PC-9 (cell line): ENCODE measurements at regions of chr3 and their contacts with region 1.

Region 1: DNA sequence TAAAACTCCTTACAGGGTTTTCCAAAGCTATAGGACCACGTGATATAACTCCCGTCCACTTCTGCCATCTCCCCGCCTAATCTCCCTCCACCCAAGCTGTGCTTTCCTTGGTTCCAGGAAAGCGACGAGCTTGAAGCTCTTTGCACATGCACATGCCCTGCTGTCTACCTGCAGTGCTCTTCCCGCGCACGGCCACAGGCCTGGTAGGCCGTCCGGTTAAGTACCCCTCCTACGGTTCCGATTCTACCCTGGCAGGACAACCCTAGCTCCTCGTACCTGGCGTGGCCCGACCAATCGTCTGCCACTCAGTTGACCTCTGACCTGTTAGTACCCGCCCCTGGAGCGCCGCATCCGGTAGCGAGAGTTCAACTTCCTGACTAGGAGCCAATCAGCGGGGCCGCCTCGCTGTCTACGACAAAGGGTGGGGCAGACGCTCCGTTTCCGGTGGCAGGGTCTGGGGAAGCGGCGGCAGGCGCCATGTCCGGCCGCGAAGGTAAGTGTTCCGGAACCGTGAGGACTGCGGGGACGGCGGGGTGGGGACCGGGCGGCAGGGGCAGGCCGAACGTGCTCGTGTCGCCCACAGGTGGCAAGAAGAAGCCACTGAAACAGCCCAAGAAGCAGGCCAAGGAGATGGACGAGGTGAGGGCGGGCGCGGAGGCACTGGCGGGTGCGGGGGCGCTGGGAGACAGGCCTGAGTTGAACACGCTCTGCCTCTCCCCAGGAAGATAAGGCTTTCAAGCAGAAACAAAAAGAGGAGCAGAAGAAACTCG is at the starts of genes CCDC51 and TMA7:
- DNase-seq: peak; percentile 95 to 96
- H3K4me3 ChIP-seq: peak within 1 kb of the TSS; percentile 96
- H3K27ac ChIP-seq: peak within 1 kb of the TSS; percentile 46
- H3K4me1 ChIP-seq: peaks cover 11% of the 10 kb centered on the region
- H3K27me3 ChIP-seq: no peaks in the 10 kb centered on the region
- CTCF ChIP-seq: no peak
- total RNA-seq, gene CCDC51: 28.5 and 35.4 TPM in 2 replicates
- total RNA-seq, gene TMA7: 235 and 314 TPM in 2 replicates

Region 2: GRCh38 chr3:48199956-48200355 is 240.0 kb before region 1 on chr3:
- CTCF ChIA-PET with region 1: interaction called, 34 read pairs
- POLR2A ChIA-PET with region 1: no interaction called
- intact Hi-C with region 1: no loop called
- DNase-seq: no peak
- H3K4me3 ChIP-seq: no peak overlapping the region
- H3K27ac ChIP-seq: no peak overlapping the region
- H3K4me1 ChIP-seq: no peaks in the 10 kb centered on the region
- H3K27me3 ChIP-seq: no peaks in the 10 kb centered on the region
- CTCF ChIP-seq: no peak

Region 3: DNA sequence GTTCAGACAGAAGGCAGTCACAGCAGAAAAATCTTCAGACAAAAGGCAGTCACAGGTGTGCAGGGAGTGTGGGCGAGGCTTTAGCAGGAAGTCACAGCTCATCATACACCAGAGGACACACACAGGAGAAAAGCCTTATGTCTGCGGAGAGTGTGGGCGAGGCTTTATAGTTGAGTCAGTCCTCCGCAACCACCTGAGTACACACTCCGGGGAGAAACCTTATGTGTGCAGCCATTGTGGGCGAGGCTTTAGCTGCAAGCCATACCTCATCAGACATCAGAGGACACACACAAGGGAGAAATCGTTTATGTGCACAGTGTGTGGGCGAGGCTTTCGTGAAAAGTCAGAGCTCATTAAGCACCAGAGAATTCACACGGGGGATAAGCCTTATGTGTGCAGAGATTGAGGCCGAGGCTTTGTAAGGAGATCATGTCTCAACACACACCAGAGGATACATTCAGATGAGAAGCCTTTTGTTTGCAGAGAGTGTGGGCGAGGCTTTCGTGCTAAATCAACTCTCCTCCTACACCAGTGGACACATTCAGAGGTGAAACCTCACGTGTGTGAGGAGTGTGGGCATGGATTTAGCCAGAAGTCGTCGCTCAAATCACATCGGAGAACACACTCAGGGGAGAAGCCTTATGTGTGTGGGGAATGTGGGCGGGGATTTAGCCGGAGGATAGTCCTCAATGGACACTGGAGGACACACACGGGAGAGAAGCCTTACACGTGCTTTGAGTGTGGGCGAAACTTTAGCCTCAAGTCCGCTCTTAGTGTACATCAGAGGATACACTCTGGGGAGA is 171.4 kb before region 1 on chr3:
- CTCF ChIA-PET with region 1: interaction called, 50 read pairs
- POLR2A ChIA-PET with region 1: interaction called, 24 read pairs
- intact Hi-C with region 1: loop called (anchors 1 kb)
- DNase-seq: peak; percentile 70 to 79
- H3K4me3 ChIP-seq: no peak overlapping the region
- H3K27ac ChIP-seq: no peak overlapping the region
- H3K4me1 ChIP-seq: no peaks in the 10 kb centered on the region
- H3K27me3 ChIP-seq: no peaks in the 10 kb centered on the region
- CTCF ChIP-seq: no peak

Region 4: DNA sequence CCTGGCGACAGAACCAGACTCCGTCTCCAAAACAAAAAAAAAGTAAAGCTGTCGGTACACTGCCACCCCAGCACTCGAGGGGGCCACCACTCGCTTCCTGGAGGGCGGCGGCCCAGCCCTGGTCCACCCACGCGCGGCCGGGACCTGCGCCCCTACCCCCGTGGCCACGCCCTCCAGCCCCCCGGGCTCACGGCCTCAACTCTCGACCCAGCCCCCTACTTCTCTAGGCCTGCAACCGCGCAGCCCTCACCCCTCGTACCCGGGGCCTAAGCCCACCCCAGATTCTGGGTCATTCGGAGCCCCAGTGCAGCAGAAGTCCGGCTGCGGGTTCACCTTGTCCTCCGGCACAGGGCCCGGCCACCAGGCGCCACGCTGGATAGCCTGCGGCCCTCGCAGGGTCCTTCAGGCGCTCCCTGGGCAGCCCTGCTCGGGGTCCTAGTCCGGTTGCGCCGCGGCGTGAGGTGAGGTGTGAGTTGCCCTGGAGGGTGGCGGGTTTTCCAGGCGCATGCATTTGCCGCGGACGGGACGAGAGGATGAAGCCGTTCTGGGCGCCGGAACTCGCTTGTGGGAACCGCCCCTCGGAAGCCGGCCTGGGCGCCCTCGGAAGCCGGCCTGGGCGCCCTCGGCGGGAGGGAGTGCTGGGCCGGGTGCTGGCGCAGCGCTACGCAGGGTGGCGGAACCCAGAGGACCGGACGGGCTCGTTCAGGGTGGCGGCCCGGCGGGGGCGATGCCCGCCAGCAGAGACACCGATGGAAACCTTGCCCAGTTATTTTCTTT is 138.8 kb before region 1 on chr3:
- CTCF ChIA-PET with region 1: no interaction called
- POLR2A ChIA-PET with region 1: no interaction called
- intact Hi-C with region 1: loop called (anchors 10 kb)
- DNase-seq: peak; percentile 76 to 94
- H3K4me3 ChIP-seq: peak within 1 kb of the TSS; percentile 71
- H3K27ac ChIP-seq: peak within 1 kb of the TSS; percentile 90
- H3K4me1 ChIP-seq: peaks cover 12% of the 10 kb centered on the region
- H3K27me3 ChIP-seq: no peaks in the 10 kb centered on the region
- CTCF ChIP-seq: no peak

Region 5: GRCh38 chr3:48408823-48409281 is 31.2 kb before region 1 on chr3:
- CTCF ChIA-PET with region 1: interaction called, 10 read pairs
- POLR2A ChIA-PET with region 1: interaction called, 3 read pairs
- intact Hi-C with region 1: no loop called
- DNase-seq: no peak
- H3K4me3 ChIP-seq: no peak overlapping the region
- H3K27ac ChIP-seq: no peak overlapping the region
- H3K4me1 ChIP-seq: no peaks in the 10 kb centered on the region
- H3K27me3 ChIP-seq: no peaks in the 10 kb centered on the region
- CTCF ChIP-seq: no peak

Region 6: DNA sequence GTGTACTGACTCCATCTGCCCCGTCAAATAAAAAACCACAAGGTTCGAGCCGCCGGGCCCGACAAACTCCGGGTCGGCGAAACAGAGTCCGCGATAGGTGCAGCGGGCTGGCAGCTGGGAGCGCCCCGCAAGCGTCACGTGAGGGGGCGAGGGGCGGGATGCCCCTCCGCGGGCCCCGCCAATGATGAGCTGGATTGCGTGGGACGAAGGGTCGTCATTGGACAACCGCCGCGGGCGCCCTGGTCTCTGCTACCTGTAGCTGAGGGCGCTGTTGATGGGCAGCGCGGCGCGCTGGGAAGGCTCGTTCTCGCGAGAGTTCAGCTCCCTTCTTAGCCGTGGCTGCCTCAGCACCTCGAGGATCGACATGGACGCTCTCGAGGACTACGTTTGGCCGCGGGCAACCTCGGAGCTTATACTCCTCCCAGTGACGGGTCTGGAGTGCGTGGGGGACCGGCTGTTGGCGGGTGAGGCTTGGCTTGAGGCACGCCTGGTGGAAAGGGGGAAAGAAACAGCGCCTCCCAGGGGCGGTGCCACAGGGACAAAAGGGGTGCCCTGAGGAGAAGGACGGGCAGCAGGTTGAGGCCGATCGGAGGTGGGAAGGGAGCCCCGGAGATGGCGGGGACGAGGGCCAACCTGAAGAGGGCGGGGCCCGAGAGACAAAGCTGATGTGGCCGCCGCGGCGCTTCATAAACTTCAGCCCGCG is 567.2 kb after region 1 on chr3 and contains the start of gene WDR6:
- CTCF ChIA-PET with region 1: no interaction called
- POLR2A ChIA-PET with region 1: interaction called, 12 read pairs
- intact Hi-C with region 1: loop called (anchors 10 kb)
- DNase-seq: peak; percentile 90 to 97
- H3K4me3 ChIP-seq: peak within 1 kb of the TSS; percentile 81
- H3K27ac ChIP-seq: peak within 1 kb of the TSS; percentile 87
- H3K4me1 ChIP-seq: peaks cover 9% of the 10 kb centered on the region; the same call in 1 of the 2 replicates
- H3K27me3 ChIP-seq: no peaks in the 10 kb centered on the region
- CTCF ChIP-seq: peak; percentile 60
- total RNA-seq, gene WDR6: 157 and 159 TPM in 2 replicates